Posterior vena cava (tissue), 2 donors: ENCODE measurements at regions of chr9 and their contacts with region 1.

Region 1: DNA sequence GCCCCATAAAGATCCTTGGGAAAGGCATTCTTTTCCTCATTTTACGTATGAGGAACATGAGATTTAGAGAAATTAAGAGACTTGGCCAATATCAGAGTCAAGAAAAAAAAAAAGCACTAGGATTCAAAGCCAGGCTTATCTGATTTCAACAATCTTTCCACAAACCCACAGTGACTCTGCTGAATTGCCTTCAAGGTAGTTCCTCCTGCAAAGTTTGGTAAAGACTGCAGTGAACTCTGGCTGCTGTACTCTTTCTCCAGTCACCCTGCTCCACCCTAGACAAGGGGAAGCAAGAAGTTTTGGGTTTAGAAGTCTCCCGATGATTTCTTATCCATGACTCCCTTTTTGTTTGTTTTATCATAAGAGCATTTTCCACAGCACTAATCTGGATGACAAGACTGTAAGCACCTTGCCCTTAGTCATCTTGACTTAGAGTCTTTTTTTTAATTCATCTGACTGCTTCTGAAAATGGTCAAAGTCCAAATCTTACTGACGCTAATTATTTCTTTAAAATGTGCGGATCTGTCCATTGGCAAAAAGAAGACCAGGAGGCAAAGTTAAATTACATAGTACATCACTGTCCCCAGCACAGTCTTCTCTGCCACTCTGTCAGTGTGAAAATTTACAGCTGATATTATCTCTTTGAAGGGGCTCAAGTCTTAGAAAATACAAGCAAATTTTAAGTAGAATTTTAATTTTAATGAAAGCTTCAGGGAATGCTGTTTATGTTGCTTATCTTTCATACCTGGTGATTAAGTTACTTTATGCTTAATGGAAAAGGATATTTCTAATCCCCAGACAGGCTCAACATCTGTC is 180.1 kb downstream of the TTLL11 start:
- DNase-seq: no peak

Region 2: GRCh38 chr9:120289990-120290975 is 1622.7 kb before region 1 on chr9:
- intact Hi-C with region 1: no loop called
- DNase-seq: no peak

Region 3: DNA sequence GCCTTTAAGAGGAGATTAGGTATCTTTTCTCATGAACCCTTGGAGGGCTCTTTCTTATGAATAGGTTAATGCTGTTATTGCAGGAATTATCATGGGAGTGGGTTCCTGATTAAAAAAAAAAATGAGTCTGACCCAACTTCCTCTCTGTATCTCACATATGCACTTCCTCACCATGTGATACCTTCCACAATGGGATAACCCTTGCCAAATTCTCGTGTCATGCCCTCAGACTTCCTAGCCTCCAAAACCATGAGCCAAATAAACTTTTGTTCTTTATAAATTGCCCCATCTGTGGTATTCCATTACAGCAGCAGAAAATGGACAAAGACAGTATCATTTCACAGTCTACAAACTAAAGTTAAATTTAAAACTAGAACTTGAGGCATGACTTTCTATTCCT is 743.4 kb after region 1 on chr9:
- intact Hi-C with region 1: loop called in 1 of 2 experiments (anchors 5 kb)
- DNase-seq: no peak